A673 (cell line): ENCODE measurements at regions of chr6 and their contacts with region 1.

Region 1: GRCh38 chr6:68226460-68226859 is 408.6 kb upstream of the ADGRB3 start:
- DNase-seq: peak; percentile 64
- H3K4me3 ChIP-seq: no peak overlapping the region
- H3K27ac ChIP-seq: no peak overlapping the region
- H3K4me1 ChIP-seq: peaks cover 11% of the 10 kb centered on the region
- H3K27me3 ChIP-seq: no peaks in the 10 kb centered on the region
- CTCF ChIP-seq: peak; percentile 74

Region 2: GRCh38 chr6:66421570-66421969 is 1804.9 kb before region 1 on chr6:
- CTCF ChIA-PET with region 1: no interaction called
- POLR2A ChIA-PET with region 1: no interaction called
- intact Hi-C with region 1: loop called (anchors 10 kb)
- DNase-seq: peak; percentile 53
- H3K4me3 ChIP-seq: no peak overlapping the region
- H3K27ac ChIP-seq: no peak overlapping the region
- H3K4me1 ChIP-seq: no peaks in the 10 kb centered on the region
- H3K27me3 ChIP-seq: no peaks in the 10 kb centered on the region
- CTCF ChIP-seq: peak; percentile 73

Region 3: DNA sequence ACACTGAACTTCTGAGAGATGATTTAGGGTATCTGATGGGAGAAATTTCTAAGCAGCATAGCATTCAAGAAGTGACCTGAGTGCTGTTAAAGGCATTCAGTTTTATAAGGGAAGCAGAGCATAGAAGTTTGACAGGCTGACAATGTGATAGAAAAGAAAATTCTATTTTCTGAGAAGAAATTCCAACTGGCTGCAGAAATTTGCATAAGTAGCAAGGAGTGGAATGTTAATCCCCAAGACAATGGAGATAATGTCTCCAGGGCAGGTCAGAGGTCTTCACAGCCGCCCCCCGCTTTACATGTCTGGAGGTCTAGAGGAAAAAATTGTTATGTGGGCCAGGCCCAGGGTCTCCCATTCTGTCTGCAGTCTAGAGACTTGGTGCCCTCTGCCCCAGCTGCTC is 1157.7 kb before region 1 on chr6:
- CTCF ChIA-PET with region 1: no interaction called
- POLR2A ChIA-PET with region 1: no interaction called
- intact Hi-C with region 1: loop called (anchors 2 kb)
- DNase-seq: no peak
- H3K4me3 ChIP-seq: no peak overlapping the region
- H3K27ac ChIP-seq: no peak overlapping the region
- H3K4me1 ChIP-seq: no peaks in the 10 kb centered on the region
- H3K27me3 ChIP-seq: no peaks in the 10 kb centered on the region
- CTCF ChIP-seq: no peak

Region 4: DNA sequence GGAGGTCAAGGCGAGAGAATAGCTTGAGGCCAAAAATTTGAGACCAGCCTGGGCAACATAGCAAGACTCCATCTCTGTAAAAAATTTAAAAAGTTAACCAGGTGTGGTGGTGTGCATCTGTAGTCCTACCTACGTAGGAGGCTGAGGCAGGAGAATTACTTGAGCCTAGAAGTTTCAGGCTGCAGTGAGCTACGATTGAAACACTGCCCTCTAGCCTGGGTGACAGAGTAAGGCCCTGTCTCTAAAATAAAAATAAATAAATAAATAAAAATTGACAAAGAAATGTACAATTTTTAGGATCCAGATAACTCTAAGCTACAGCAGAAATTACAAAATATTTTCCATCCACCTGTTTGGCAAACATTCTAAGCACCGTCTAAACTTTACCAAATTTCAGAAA is 532.3 kb before region 1 on chr6:
- CTCF ChIA-PET with region 1: no interaction called
- POLR2A ChIA-PET with region 1: no interaction called
- intact Hi-C with region 1: no loop called
- DNase-seq: peak; percentile 10
- H3K4me3 ChIP-seq: no peak overlapping the region
- H3K27ac ChIP-seq: no peak overlapping the region
- H3K4me1 ChIP-seq: peaks cover 5% of the 10 kb centered on the region
- H3K27me3 ChIP-seq: no peaks in the 10 kb centered on the region
- CTCF ChIP-seq: 0 out of 2 replicates have a peak, but pooled peaks have one; percentile 22

Region 5: DNA sequence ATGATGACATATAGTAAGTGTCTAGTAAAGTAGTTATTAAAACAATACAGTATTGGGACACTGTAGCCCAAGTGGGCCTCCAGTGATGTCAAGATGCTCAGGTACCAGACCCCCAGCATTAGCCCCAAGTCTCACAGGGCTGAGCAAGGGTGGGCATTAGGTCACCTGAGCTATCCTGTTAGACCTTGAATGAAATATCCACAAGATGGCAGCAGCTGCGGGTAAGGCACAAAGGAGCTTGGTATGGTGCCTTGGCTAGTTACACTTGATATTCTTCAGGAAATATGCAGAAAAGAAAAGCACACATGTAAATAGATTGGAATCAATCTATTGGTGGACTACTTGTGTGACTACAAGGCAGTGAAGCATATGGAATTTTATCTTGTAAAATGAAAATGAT is 293.2 kb before region 1 on chr6:
- CTCF ChIA-PET with region 1: interaction called, 6 read pairs
- POLR2A ChIA-PET with region 1: no interaction called
- intact Hi-C with region 1: loop called (anchors 5 kb)
- DNase-seq: peak; percentile 30
- H3K4me3 ChIP-seq: no peak overlapping the region
- H3K27ac ChIP-seq: no peak overlapping the region
- H3K4me1 ChIP-seq: no peaks in the 10 kb centered on the region
- H3K27me3 ChIP-seq: no peaks in the 10 kb centered on the region
- CTCF ChIP-seq: peak; percentile 55

Region 6: DNA sequence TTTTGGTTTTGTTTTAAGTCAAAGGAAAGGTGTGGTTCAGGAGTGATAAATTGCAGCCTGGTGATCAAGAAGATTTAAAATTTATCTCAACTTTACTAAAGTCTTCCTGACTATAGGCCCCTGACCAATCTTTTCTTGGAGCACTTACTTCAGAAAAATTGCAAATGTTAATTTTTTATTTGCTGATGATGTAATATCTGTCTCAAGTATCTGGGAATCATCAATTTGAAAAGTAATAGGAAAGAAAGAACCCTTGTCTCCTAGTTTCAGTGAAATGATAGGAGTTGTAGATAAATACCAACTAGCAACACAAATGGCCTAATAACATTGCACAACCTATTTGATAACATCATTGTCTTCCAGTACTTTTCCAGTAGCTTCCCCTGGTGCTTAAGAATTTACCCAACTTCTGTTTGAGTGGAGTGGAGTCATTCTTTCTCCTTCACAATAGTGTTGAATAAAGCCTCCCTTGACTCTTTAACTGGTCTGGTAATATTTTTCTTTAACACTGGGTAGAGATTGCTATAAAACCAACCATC is 239.7 kb before region 1 on chr6:
- CTCF ChIA-PET with region 1: no interaction called
- POLR2A ChIA-PET with region 1: no interaction called
- intact Hi-C with region 1: no loop called
- DNase-seq: no peak
- H3K4me3 ChIP-seq: no peak overlapping the region
- H3K27ac ChIP-seq: no peak overlapping the region
- H3K4me1 ChIP-seq: no peaks in the 10 kb centered on the region
- H3K27me3 ChIP-seq: no peaks in the 10 kb centered on the region
- CTCF ChIP-seq: no peak

Region 7: DNA sequence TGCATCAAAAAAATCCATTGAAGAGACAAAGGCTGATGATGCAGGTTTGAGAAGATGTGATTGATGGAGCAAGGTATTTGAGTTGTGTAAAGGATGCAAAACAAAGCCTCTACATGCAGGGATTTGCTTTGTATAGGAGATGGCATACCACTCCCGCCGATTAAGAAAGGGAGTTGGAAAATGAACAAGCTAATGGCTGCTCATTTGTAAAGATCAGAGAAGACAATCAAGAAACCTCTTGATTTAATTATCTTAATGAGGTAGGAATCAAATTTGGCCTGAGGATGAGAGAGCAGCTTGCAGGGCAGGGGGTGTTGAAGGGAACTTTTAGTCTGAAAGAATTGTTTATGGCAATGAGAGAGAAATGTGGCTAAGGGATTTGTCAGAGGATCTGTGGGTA is 39.6 kb before region 1 on chr6:
- CTCF ChIA-PET with region 1: no interaction called
- POLR2A ChIA-PET with region 1: no interaction called
- intact Hi-C with region 1: no loop called
- DNase-seq: no peak
- H3K4me3 ChIP-seq: no peak overlapping the region
- H3K27ac ChIP-seq: no peak overlapping the region
- H3K4me1 ChIP-seq: no peaks in the 10 kb centered on the region
- H3K27me3 ChIP-seq: no peaks in the 10 kb centered on the region
- CTCF ChIP-seq: no peak

Region 8: GRCh38 chr6:68443704-68444103 is 217.2 kb after region 1 on chr6:
- CTCF ChIA-PET with region 1: no interaction called
- POLR2A ChIA-PET with region 1: no interaction called
- intact Hi-C with region 1: no loop called
- DNase-seq: no peak
- H3K4me3 ChIP-seq: no peak overlapping the region
- H3K27ac ChIP-seq: no peak overlapping the region
- H3K4me1 ChIP-seq: no peaks in the 10 kb centered on the region
- H3K27me3 ChIP-seq: no peaks in the 10 kb centered on the region
- CTCF ChIP-seq: no peak